Naive thymus-derived CD8-positive, alpha-beta T cell (primary cell): ENCODE measurements at regions of chr2 and their contacts with region 1.

Region 1: DNA sequence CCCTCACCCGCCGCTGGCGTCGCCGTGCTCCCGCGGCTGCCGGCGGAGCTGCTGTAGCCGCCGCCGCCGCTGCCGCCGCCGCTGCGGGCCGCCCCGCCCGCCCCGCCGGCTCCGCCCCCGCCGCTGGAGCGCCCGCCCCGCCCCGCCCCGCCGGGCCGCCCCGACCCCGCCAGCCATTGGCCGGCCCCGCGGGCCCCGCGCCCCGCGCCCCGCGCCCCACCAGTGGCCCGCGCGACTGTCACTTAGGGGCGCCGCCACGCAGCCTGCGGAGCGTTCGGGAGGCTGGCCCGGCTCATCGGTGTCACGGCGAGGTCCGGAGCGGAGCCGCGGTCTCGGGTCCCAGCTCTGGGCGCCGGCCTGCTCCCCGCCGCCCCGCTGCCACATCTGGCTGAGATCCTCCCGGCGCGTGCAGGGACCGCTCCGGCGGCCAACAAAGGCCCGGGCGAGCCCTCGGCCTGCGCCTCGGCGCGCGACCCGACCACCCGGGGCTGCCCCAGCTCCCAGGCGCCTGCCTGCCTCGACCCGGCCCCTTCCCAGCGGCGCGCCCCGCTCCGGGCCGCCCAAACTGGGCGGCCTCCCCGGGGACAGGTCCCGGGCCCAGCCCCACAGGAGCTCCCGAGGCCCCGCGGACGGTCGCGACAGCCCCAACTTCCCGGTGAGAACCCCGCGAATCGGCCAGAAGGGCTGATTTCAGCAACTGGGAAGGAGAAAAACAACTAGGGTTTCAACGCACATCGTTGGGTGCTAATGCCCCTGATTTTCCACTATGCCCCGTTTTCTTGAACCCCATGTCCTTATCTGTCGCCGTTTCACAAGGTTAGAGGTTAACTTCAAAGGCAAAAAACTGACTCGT is at the start of gene MGAT4A:
- DNase-seq: peak; percentile 72 to 88 (median 82)
- ATAC-seq: peak; percentile 76 to 77
- H3K4me3 Mint-ChIP-seq: peak within 1 kb of the TSS; percentile 73 to 98 (median 92)
- H3K27ac Mint-ChIP-seq: peak within 1 kb of the TSS; percentile 94 to 99 (median 97)
- H3K4me1 Mint-ChIP-seq: peaks cover 22 to 62% (median 58%) of the 10 kb centered on the region in 4 donors
- H3K27me3 Mint-ChIP-seq: no peaks in the 10 kb centered on the region
- polyA plus RNA-seq, gene MGAT4A: 285 to 350 (median 310) TPM

Region 2: DNA sequence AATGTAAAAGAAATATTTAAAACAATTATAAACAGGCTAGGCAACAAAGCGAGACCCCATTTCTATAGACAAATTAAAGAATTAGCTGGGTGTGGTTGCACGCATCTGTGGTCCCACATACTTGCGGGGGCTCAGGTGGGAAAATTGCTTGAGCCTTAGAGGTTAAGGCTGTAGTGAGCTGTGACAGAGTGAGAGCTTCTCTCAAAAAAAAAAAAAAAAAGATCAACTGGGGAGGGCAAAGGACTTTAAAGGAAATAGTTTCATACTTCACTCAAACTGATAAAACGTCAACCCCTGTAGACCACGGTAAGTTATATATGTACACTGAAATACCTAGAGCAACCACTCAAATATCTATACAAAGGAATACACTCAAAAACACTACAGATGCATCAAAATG is 37.8 kb before region 1 on chr2:
- POLR2A ChIA-PET with region 1: interaction called, 13 read pairs
- DNase-seq: peak in 3 of 10 donors; percentile 22 to 55 (median 40)
- ATAC-seq: peak; percentile 73 to 76
- H3K4me3 Mint-ChIP-seq: peak overlapping the region; percentile 52 to 84 (median 74)
- H3K27ac Mint-ChIP-seq: peak overlapping the region; percentile 80 to 96 (median 88)
- H3K4me1 Mint-ChIP-seq: peaks cover 41 to 97% (median 84%) of the 10 kb centered on the region in 4 donors
- H3K27me3 Mint-ChIP-seq: no peaks in the 10 kb centered on the region

Region 3: GRCh38 chr2:98709535-98709934 is 21.7 kb before region 1 on chr2:
- POLR2A ChIA-PET with region 1: interaction called, 17 read pairs
- DNase-seq: no peak
- ATAC-seq: no peak
- H3K4me3 Mint-ChIP-seq: peak overlapping the region; percentile 57 to 82 (median 74)
- H3K27ac Mint-ChIP-seq: peak overlapping the region; percentile 70 to 95 (median 87)
- H3K4me1 Mint-ChIP-seq: peaks cover 55 to 88% (median 86%) of the 10 kb centered on the region in 4 donors
- H3K27me3 Mint-ChIP-seq: no peaks in the 10 kb centered on the region

Region 4: GRCh38 chr2:98743835-98744234 is 12.6 kb after region 1 on chr2:
- POLR2A ChIA-PET with region 1: interaction called, 24 read pairs
- DNase-seq: peak in 1 of 10 donors; percentile 25
- ATAC-seq: peak; percentile 61 to 65
- H3K4me3 Mint-ChIP-seq: peak overlapping the region in 5 of 10 donors; percentile 18 to 61 (median 48)
- H3K27ac Mint-ChIP-seq: peak overlapping the region in 6 of 10 donors; percentile 52 to 86 (median 64)
- H3K4me1 Mint-ChIP-seq: peaks cover 24 to 67% (median 56%) of the 10 kb centered on the region in 4 donors
- H3K27me3 Mint-ChIP-seq: no peaks in the 10 kb centered on the region

Region 5: DNA sequence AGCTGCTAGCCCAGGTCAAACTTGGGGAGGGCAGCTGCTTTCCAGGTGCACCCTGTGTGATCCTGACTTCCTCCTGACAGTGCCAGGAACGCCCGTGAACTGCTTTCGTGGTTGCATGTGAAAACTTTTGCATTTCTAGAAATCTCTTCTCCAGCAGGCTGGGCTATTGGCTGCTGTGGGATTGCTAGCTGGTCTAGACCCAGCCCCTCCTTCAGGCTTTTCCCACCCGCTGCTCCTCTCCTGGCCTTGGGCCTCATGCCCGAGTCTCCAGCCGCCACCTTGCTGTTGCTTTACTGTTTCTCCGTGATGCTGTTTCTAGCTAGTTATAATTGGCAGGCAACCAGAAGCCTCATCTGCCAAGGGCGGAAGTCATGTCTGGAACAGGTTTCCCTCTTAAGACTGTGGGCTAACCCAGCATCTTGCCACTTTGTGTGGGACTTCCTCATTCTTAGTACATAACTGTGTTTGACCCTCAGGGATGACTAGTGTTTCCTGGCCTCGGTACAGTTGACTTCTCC is 26.7 kb after region 1 on chr2:
- POLR2A ChIA-PET with region 1: interaction called, 189 read pairs
- DNase-seq: peak; percentile 33 to 80 (median 60)
- ATAC-seq: peak; percentile 82 to 86
- H3K4me3 Mint-ChIP-seq: peak overlapping the region; percentile 70 to 90 (median 84)
- H3K27ac Mint-ChIP-seq: peak overlapping the region; percentile 94 to 99 (median 96)
- H3K4me1 Mint-ChIP-seq: peaks cover 44 to 82% (median 69%) of the 10 kb centered on the region in 4 donors
- H3K27me3 Mint-ChIP-seq: no peaks in the 10 kb centered on the region